K562 (cell line): ENCODE measurements at regions of chr13 and their contacts with region 1.

Region 1: GRCh38 chr13:90686442-90686841 is 661.0 kb upstream of the MIR17HG start:
- DNase-seq: no peak
- ATAC-seq: no peak
- H3K4me3 ChIP-seq: no peak overlapping the region
- H3K27ac ChIP-seq: no peak overlapping the region
- H3K4me1 ChIP-seq: no peaks in the 10 kb centered on the region
- H3K27me3 ChIP-seq: no peaks in the 10 kb centered on the region
- CTCF ChIP-seq: no peak
- EP300 ChIP-seq: no peak; the same call in 1 of the 2 replicates
- POLR2A ChIP-seq: no peak
- RAD21 ChIP-seq: no peak

Region 2: GRCh38 chr13:90702050-90702449 is 15.6 kb after region 1 on chr13:
- CTCF ChIA-PET with region 1: no interaction called
- POLR2A ChIA-PET with region 1: no interaction called
- in situ Hi-C with region 1: no loop called
- intact Hi-C with region 1: loop called (anchors 2 kb)
- DNase-seq: no peak
- ATAC-seq: no peak
- H3K4me3 ChIP-seq: no peak overlapping the region
- H3K27ac ChIP-seq: no peak overlapping the region
- H3K4me1 ChIP-seq: no peaks in the 10 kb centered on the region
- H3K27me3 ChIP-seq: no peaks in the 10 kb centered on the region
- CTCF ChIP-seq: no peak
- EP300 ChIP-seq: no peak
- POLR2A ChIP-seq: no peak
- RAD21 ChIP-seq: no peak

Region 3: GRCh38 chr13:90746230-90746629 is 59.8 kb after region 1 on chr13:
- CTCF ChIA-PET with region 1: no interaction called
- POLR2A ChIA-PET with region 1: no interaction called
- in situ Hi-C with region 1: no loop called
- intact Hi-C with region 1: loop called (anchors 10 kb)
- DNase-seq: no peak
- ATAC-seq: no peak
- H3K4me3 ChIP-seq: no peak overlapping the region
- H3K27ac ChIP-seq: no peak overlapping the region
- H3K4me1 ChIP-seq: no peaks in the 10 kb centered on the region
- H3K27me3 ChIP-seq: no peaks in the 10 kb centered on the region
- CTCF ChIP-seq: no peak
- EP300 ChIP-seq: no peak
- POLR2A ChIP-seq: no peak
- RAD21 ChIP-seq: no peak